ENCODE measurements at regions of chr3 and their contacts with region 1.

Region 1: DNA sequence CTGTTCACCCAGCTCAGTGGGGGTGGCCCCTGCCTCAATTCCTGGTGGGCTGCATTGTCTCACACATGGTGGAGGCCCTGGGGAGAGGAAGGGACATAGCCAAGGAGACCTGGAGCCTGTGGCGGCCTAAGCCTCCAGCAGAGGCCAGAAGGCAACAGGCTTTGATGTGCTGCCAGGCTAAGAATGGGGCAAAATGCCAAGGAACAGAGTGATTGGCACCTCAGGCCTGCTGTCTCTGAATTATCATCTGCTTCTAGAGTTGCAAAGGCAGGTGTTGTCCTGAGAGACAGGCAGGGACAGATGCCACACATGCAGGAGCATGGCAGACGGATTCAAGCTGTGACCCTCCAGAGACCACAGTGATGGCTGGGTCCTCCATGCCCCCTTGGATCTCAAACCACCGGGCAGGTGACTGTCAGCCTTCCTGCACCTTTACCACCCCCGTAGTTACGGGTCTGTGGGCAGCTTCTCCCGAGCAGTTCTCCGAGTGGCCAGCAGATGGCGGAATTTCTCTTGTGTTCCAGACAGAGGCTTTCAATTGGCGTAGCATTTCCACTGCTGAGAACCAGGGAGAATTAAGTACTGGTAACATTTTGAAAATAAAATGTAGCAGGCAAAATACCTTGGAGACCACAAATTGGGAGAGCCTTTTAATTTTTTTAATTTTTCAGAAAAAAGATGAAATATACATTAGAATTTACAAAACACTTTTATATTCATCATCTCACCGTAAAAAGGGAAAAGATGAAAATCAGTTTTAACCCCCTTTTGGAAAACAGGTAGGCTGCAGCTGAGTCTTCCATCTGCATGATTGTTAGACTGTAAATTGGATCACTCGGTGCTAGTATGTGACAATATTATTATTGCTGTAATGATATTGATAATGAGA is 525.5 kb upstream of the CFAP20DC start:
- DNase-seq: peak; percentile 40
- ATAC-seq: peak; percentile 95
- H3K4me3 ChIP-seq: no peak overlapping the region
- H3K27ac ChIP-seq: no peak overlapping the region
- H3K4me1 ChIP-seq: no peaks in the 10 kb centered on the region
- H3K27me3 ChIP-seq: no peaks in the 10 kb centered on the region
- CTCF ChIP-seq: peak; percentile 93 to 97 (median 95)
- EP300 ChIP-seq: no peak
- POLR2A ChIP-seq: no peak
- RAD21 ChIP-seq: peak; percentile 97

Region 2: GRCh38 chr3:59056706-59057105 is 518.7 kb before region 1 on chr3:
- CTCF ChIA-PET with region 1: no interaction called
- POLR2A ChIA-PET with region 1: no interaction called
- RAD21 ChIA-PET with region 1: no interaction called
- SMC1A ChIA-PET with region 1: no interaction called
- in situ Hi-C with region 1: no loop called
- intact Hi-C with region 1: no loop called
- DNase-seq: no peak
- ATAC-seq: no peak
- H3K4me3 ChIP-seq: no peak overlapping the region
- H3K27ac ChIP-seq: no peak overlapping the region
- H3K4me1 ChIP-seq: no peaks in the 10 kb centered on the region
- H3K27me3 ChIP-seq: no peaks in the 10 kb centered on the region
- CTCF ChIP-seq: no peak
- EP300 ChIP-seq: no peak
- POLR2A ChIP-seq: no peak
- RAD21 ChIP-seq: no peak

Region 3: GRCh38 chr3:59540696-59541095 is 34.7 kb before region 1 on chr3:
- CTCF ChIA-PET with region 1: interaction called, 11 read pairs
- POLR2A ChIA-PET with region 1: no interaction called
- RAD21 ChIA-PET with region 1: no interaction called
- SMC1A ChIA-PET with region 1: interaction called, 6 read pairs
- in situ Hi-C with region 1: no loop called
- intact Hi-C with region 1: no loop called
- DNase-seq: peak; percentile 60
- ATAC-seq: peak; percentile 97
- H3K4me3 ChIP-seq: no peak overlapping the region
- H3K27ac ChIP-seq: no peak overlapping the region
- H3K4me1 ChIP-seq: no peaks in the 10 kb centered on the region
- H3K27me3 ChIP-seq: no peaks in the 10 kb centered on the region
- CTCF ChIP-seq: no peak
- EP300 ChIP-seq: peak; percentile 51 to 65; a peak in 2 of 4 replicates
- POLR2A ChIP-seq: no peak
- RAD21 ChIP-seq: no peak

Region 4: GRCh38 chr3:59731943-59732342 is 156.6 kb after region 1 on chr3:
- CTCF ChIA-PET with region 1: no interaction called
- POLR2A ChIA-PET with region 1: no interaction called
- RAD21 ChIA-PET with region 1: no interaction called
- SMC1A ChIA-PET with region 1: no interaction called
- in situ Hi-C with region 1: no loop called
- intact Hi-C with region 1: loop called (anchors 5 kb)
- DNase-seq: peak; percentile 31
- ATAC-seq: peak; percentile 88
- H3K4me3 ChIP-seq: no peak overlapping the region
- H3K27ac ChIP-seq: no peak overlapping the region
- H3K4me1 ChIP-seq: peaks cover 23% of the 10 kb centered on the region
- H3K27me3 ChIP-seq: no peaks in the 10 kb centered on the region
- CTCF ChIP-seq: no peak
- EP300 ChIP-seq: peak in 1 of 2 experiments; percentile 44; a peak in 2 of 4 replicates
- POLR2A ChIP-seq: no peak
- RAD21 ChIP-seq: no peak

Region 5: DNA sequence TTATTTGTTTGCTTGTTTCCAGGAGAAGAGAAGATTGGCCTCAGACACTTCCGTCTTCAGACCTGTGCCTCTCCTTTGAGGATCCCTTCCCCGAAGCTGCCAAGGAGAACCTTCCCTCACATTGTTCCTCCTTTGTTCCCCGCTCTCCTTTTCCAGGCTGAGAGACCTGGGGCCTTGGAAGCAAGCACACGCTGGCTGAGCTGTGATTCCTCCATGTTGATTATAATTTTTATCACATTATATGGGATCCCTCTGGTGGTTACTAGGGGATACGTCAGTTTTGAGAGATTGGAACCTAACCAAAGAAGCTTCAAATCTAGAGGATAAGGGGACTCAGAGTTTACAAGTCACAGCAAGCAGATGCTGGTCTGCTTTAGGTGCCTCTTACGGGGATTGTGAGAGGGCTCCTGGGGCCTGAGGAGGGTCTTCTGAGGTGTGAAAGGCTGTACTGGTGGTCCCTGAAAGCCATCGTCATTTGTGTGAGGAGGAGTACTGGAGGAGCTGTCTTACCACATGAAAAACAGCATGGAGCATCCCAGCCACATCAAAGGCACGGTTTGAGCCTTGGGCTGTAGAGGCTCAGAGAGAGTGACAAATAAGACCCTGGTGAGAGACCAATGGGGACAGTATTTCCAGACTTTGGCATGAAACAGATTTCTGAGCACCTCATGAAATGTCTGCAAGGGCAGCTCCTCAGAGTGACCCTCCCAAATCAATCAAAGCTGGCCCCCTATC is 234.5 kb after region 1 on chr3:
- CTCF ChIA-PET with region 1: interaction called, 23 read pairs
- POLR2A ChIA-PET with region 1: no interaction called
- RAD21 ChIA-PET with region 1: interaction called, 10 read pairs
- SMC1A ChIA-PET with region 1: interaction called, 21 read pairs
- in situ Hi-C with region 1: no loop called
- intact Hi-C with region 1: loop called (anchors 2 kb)
- DNase-seq: no peak
- ATAC-seq: peak; percentile 49
- H3K4me3 ChIP-seq: no peak overlapping the region
- H3K27ac ChIP-seq: no peak overlapping the region
- H3K4me1 ChIP-seq: no peaks in the 10 kb centered on the region
- H3K27me3 ChIP-seq: no peaks in the 10 kb centered on the region
- CTCF ChIP-seq: peak in 2 of 3 experiments; percentile 10 to 34; a peak in 2 of 6 replicates
- EP300 ChIP-seq: no peak
- POLR2A ChIP-seq: no peak
- RAD21 ChIP-seq: peak; percentile 44

Region 6: GRCh38 chr3:59857589-59858346 is 282.4 kb after region 1 on chr3:
- CTCF ChIA-PET with region 1: interaction called, 119 read pairs
- POLR2A ChIA-PET with region 1: no interaction called
- RAD21 ChIA-PET with region 1: interaction called, 42 read pairs
- SMC1A ChIA-PET with region 1: interaction called, 39 read pairs
- in situ Hi-C with region 1: loop called (anchors 5 kb)
- intact Hi-C with region 1: loop called (anchors 1 kb)
- DNase-seq: peak; percentile 17
- ATAC-seq: peak; percentile 100
- H3K4me3 ChIP-seq: no peak overlapping the region
- H3K27ac ChIP-seq: no peak overlapping the region
- H3K4me1 ChIP-seq: no peaks in the 10 kb centered on the region
- H3K27me3 ChIP-seq: no peaks in the 10 kb centered on the region; a peak in 1 of 4 replicates
- CTCF ChIP-seq: peak; percentile 89 to 96 (median 95)
- EP300 ChIP-seq: no peak
- POLR2A ChIP-seq: no peak
- RAD21 ChIP-seq: peak; percentile 85

Region 7: GRCh38 chr3:60226912-60227311 is 651.6 kb after region 1 on chr3:
- CTCF ChIA-PET with region 1: no interaction called
- POLR2A ChIA-PET with region 1: no interaction called
- RAD21 ChIA-PET with region 1: no interaction called
- SMC1A ChIA-PET with region 1: no interaction called
- in situ Hi-C with region 1: no loop called
- intact Hi-C with region 1: no loop called
- DNase-seq: no peak
- ATAC-seq: no peak
- H3K4me3 ChIP-seq: no peak overlapping the region
- H3K27ac ChIP-seq: no peak overlapping the region
- H3K4me1 ChIP-seq: no peaks in the 10 kb centered on the region
- H3K27me3 ChIP-seq: no peaks in the 10 kb centered on the region
- CTCF ChIP-seq: no peak
- EP300 ChIP-seq: no peak
- POLR2A ChIP-seq: no peak
- RAD21 ChIP-seq: no peak

Measured in GM12878 (cell line).